Activated CD8-positive, alpha-beta memory T cell treated with anti-CD3 and anti-CD28 coated beads, Interleukin-2, amount 10 ng/mL, durations not matched to agents 7 days and 5 days (primary cell): ENCODE measurements at regions of chr3 and their contacts with region 1.

Region 1: DNA sequence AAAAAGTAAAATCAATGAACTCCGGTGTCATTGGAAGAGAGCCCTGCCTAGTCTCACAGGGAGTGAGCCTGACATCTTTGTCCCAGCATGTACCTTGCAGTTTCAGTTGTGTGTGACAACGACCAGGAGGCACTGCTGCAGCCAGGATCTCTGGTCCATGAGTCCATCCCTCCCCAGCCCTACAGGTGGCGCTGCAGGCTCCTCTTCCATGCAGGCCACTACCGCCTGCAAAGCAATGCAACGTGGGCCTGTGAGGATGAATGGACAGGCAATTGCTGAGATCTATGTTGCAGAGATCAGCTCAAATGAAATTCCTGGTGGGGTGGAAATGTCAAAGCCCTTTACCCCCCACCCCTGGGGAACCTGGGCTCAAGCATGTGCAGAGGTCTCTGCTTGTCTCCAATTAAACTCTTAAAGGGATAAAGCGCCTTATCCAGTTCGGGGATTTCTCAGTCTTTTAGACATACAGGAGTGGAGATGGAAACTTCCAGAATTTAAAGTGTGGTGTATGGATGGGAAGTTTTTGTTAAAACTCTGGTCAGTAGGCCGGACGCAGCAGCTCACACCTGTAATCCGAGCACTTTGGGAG is 35.8 kb downstream of the TKT start:
- DNase-seq: peak; percentile 90
- ATAC-seq: peak; percentile 96
- H3K4me3 Mint-ChIP-seq: no peak overlapping the region
- H3K27ac Mint-ChIP-seq: no peak overlapping the region
- H3K4me1 Mint-ChIP-seq: peaks cover 5% of the 10 kb centered on the region
- H3K27me3 Mint-ChIP-seq: peaks cover 4% of the 10 kb centered on the region

Region 2: GRCh38 chr3:53252096-53252946 is 32.3 kb after region 1 on chr3:
- CTCF ChIA-PET with region 1: interaction called, 10 read pairs
- DNase-seq: no peak
- ATAC-seq: no peak
- H3K4me3 Mint-ChIP-seq: peak overlapping the region; percentile 15
- H3K27ac Mint-ChIP-seq: peak overlapping the region; percentile 60
- H3K4me1 Mint-ChIP-seq: peaks cover 64% of the 10 kb centered on the region
- H3K27me3 Mint-ChIP-seq: no peaks in the 10 kb centered on the region